ENCODE measurements at regions of chr3 and their contacts with region 1.

Region 1: GRCh38 chr3:139935016-139935865 is at the start of gene CLSTN2:
- DNase-seq: peak; percentile 19 to 35
- ATAC-seq: peak; percentile 75 to 76
- H3K4me3 ChIP-seq: peak within 1 kb of the TSS; percentile 57 to 67 (median 60)
- H3K27ac ChIP-seq: peak within 1 kb of the TSS in 1 of 4 donors; percentile 59
- H3K4me1 ChIP-seq: no peaks in the 10 kb centered on the region
- H3K27me3 ChIP-seq: peaks cover 0 to 9% (median 0%) of the 10 kb centered on the region in 3 donors
- CTCF ChIP-seq: no peak
- POLR2A ChIP-seq: peak; percentile 46 to 73
- total RNA-seq, gene CLSTN2: 1.1 to 4.9 (median 4.0) TPM

Region 2: GRCh38 chr3:139427283-139427993 is 507.8 kb before region 1 on chr3:
- in situ Hi-C with region 1: loop called in 1 of 4 experiments (anchors 10 kb)
- intact Hi-C with region 1: loop called (anchors 5 kb)
- DNase-seq: no peak
- ATAC-seq: peak; percentile 95 to 97
- H3K4me3 ChIP-seq: no peak overlapping the region
- H3K27ac ChIP-seq: no peak overlapping the region
- H3K4me1 ChIP-seq: peaks cover 9 to 11% of the 10 kb centered on the region in 2 donors
- H3K27me3 ChIP-seq: no peaks in the 10 kb centered on the region
- CTCF ChIP-seq: peak; percentile 59 to 80 (median 67)
- POLR2A ChIP-seq: no peak

Region 3: DNA sequence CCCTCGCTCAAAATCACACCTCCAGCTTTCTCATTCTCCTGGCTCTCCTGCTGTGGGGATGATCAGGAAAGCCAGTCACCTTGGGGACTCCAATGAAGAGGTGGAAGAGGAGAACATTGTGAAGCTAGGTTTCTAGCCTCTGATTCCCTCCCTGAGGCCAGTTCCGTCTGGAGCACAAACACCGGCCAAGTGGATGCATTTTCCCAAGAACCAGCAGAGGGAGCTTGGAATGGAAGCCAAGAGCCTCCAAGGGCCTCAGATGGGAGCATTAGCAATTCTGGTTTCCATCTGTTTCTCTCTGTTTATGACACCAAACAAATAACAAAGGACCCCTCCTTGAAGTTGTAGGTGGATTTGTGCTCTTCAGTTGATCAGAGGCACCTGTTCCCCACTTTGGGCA is 216.8 kb before region 1 on chr3:
- in situ Hi-C with region 1: no loop called
- intact Hi-C with region 1: loop called (anchors 2 kb)
- DNase-seq: no peak
- ATAC-seq: no peak
- H3K4me3 ChIP-seq: no peak overlapping the region
- H3K27ac ChIP-seq: no peak overlapping the region
- H3K4me1 ChIP-seq: no peaks in the 10 kb centered on the region
- H3K27me3 ChIP-seq: no peaks in the 10 kb centered on the region
- CTCF ChIP-seq: peak in 1 of 5 experiments; percentile 39
- POLR2A ChIP-seq: no peak

Region 4: GRCh38 chr3:139780593-139780992 is 154.6 kb before region 1 on chr3:
- in situ Hi-C with region 1: no loop called
- intact Hi-C with region 1: loop called (anchors 10 kb)
- DNase-seq: no peak
- ATAC-seq: no peak
- H3K4me3 ChIP-seq: no peak overlapping the region
- H3K27ac ChIP-seq: no peak overlapping the region
- H3K4me1 ChIP-seq: no peaks in the 10 kb centered on the region
- H3K27me3 ChIP-seq: no peaks in the 10 kb centered on the region
- CTCF ChIP-seq: no peak
- POLR2A ChIP-seq: no peak

Region 5: DNA sequence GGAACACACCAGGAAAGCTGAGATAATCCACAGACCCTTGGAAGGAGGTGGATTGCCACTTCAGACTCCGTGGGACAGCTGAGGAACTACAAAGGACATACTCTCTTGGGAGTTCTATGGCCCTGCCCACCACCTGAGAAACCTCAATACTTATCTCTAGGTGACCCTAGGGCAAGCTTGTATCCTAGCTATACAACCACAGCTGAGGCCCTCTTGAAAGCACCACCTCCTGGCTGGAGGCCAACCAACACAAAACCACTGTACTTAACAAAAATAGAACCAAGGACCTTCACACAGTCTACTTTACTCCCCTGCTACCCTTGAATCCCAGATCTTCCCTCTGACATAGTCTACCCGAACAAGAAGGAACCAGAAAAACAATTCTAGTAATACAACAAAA is 681.9 kb after region 1 on chr3:
- in situ Hi-C with region 1: no loop called
- intact Hi-C with region 1: no loop called
- DNase-seq: no peak
- ATAC-seq: no peak
- H3K4me3 ChIP-seq: no peak overlapping the region
- H3K27ac ChIP-seq: no peak overlapping the region
- H3K4me1 ChIP-seq: no peaks in the 10 kb centered on the region
- H3K27me3 ChIP-seq: no peaks in the 10 kb centered on the region
- CTCF ChIP-seq: no peak
- POLR2A ChIP-seq: no peak

Region 6: DNA sequence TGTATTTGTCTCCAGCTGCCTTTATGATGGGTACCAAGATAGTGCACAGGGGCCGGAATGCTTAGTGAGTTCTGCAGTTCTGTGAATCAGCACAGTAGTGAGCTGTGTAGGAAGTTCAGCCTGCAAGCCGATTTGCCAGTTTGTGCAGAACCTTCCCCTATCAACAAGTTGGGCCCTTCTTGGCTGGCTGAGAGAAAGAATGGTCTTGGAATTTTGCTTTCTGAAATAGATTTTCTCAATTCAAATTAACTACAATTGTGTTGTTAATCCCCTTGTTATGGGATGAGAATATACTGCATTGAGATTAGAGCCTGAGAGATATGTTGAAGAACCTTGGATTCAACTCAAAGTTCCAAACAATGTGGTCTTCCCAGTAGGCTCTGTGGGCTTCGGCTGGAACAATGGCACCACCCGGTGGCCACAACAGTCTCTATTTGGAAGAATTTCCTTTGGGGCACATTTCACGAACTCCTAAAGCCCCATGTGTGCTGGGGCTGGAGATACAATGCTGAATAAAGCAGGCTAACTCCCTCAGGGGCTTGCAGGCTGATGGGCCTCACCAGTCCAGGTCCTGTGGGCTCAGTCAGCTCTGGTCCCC is 801.7 kb after region 1 on chr3:
- in situ Hi-C with region 1: loop called in 1 of 4 experiments (anchors 10 kb)
- intact Hi-C with region 1: no loop called
- DNase-seq: peak in 1 of 2 donors; percentile 23
- ATAC-seq: peak in 1 of 2 donors; percentile 41
- H3K4me3 ChIP-seq: no peak overlapping the region
- H3K27ac ChIP-seq: no peak overlapping the region
- H3K4me1 ChIP-seq: no peaks in the 10 kb centered on the region
- H3K27me3 ChIP-seq: no peaks in the 10 kb centered on the region
- CTCF ChIP-seq: peak in 3 of 5 experiments; percentile 38 to 47 (median 45)
- POLR2A ChIP-seq: no peak

Region 7: GRCh38 chr3:140863580-140864009 is 928.4 kb after region 1 on chr3:
- in situ Hi-C with region 1: loop called (anchors 10 to 25 kb)
- intact Hi-C with region 1: loop called (anchors 5 kb)
- DNase-seq: peak in 1 of 2 donors; percentile 25
- ATAC-seq: peak in 1 of 2 donors; percentile 58
- H3K4me3 ChIP-seq: no peak overlapping the region
- H3K27ac ChIP-seq: no peak overlapping the region
- H3K4me1 ChIP-seq: no peaks in the 10 kb centered on the region
- H3K27me3 ChIP-seq: no peaks in the 10 kb centered on the region
- CTCF ChIP-seq: peak in 4 of 5 experiments; percentile 7 to 52 (median 45)
- POLR2A ChIP-seq: no peak

Measured in gastrocnemius medialis (tissue), 4 donors.